Activated B cell treated with CpG ODN at 0.5 μM for 24 hours (primary cell): ENCODE measurements at regions of chr6 and their contacts with region 1.

Region 1: DNA sequence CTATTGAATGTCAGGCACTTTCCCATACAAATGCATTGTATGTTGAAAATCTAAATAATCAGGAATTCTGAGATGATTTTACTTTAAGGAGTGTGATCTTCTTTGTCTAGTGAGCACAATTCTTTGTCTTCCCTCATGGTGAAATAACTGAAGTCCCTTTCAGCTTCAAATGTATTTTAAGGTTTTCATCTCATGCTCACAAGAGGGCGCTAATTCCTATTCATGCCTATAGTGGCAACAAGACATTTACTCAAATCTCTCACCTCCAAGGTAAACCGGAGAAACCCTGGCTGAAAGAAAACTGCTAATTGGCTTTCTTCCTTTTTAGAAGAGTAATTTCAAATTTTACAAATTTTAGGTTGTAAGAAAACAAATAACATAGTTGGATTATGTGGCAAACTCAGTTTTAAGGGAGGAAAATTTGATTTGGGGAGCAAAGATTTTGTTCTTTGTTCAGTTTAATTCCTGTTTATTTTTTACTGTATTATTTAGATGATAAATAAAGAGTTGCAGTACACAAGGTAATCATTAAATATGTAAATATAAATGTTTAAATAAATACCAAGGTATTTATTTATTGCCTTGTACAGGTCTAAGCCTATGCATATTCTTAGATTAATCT is 69.1 kb downstream of the SLC35F1 start:
- DNase-seq: no peak
- ATAC-seq: no peak
- H3K4me3 Mint-ChIP-seq: no peak overlapping the region
- H3K27ac Mint-ChIP-seq: no peak overlapping the region
- H3K4me1 Mint-ChIP-seq: no peaks in the 10 kb centered on the region
- H3K27me3 Mint-ChIP-seq: no peaks in the 10 kb centered on the region
- CTCF ChIP-seq: peak; percentile 23

Region 2: DNA sequence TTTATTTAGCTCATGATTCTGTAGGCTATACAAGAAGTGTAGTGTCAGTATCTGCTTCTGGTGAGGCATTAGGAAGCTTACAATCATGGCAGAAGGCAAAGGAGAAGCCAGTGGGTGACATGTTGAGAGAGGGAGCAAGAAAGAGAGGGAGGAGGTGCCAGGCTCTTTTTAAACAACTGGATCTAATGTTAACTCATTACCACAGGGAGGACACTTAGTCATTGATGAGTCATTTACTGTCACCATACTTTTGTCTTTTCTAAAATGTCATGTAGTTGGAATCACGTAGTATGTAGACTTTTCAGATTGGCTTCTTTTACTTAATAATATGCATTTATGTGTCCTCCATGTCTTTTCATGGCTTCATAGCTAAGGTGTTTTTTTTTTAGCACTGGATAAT is 242.8 kb before region 1 on chr6:
- CTCF ChIA-PET with region 1: no interaction called
- POLR2A ChIA-PET with region 1: no interaction called
- intact Hi-C with region 1: no loop called
- DNase-seq: no peak
- ATAC-seq: no peak
- H3K4me3 Mint-ChIP-seq: no peak overlapping the region
- H3K27ac Mint-ChIP-seq: no peak overlapping the region
- H3K4me1 Mint-ChIP-seq: no peaks in the 10 kb centered on the region
- H3K27me3 Mint-ChIP-seq: peaks cover 6% of the 10 kb centered on the region
- CTCF ChIP-seq: no peak

Region 3: DNA sequence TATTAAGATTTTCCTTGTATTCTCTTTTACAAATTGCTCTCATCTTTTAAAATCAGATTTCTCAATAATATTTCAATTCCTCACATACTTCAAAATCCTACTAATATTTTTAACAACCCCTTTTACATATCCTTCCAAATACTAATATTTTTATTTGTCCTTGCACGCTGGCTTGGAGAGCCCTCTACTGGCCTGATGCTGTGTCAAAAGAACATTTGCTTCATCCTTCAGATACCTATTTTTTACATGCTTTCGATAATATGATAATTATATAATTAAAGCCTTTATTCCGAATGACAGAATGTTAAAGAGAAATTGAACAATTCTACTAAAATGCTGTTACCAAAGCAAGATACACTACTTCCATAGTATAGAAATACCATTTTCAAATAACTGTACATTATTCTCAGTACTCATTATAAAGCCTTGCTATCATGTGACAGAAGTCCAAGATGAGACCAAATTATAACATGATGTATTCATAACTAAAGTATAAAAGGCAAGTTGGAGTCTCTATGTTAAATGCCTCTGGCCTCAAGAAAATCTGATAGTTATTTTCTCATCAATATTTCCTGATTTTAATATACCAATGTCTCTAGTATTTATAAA is 533.0 kb after region 1 on chr6:
- CTCF ChIA-PET with region 1: no interaction called
- POLR2A ChIA-PET with region 1: no interaction called
- intact Hi-C with region 1: loop called (anchors 2 kb)
- DNase-seq: no peak
- ATAC-seq: no peak
- H3K4me3 Mint-ChIP-seq: no peak overlapping the region
- H3K27ac Mint-ChIP-seq: no peak overlapping the region
- H3K4me1 Mint-ChIP-seq: no peaks in the 10 kb centered on the region
- H3K27me3 Mint-ChIP-seq: no peaks in the 10 kb centered on the region
- CTCF ChIP-seq: no peak

Region 4: GRCh38 chr6:118551063-118552053 is 575.2 kb after region 1 on chr6:
- CTCF ChIA-PET with region 1: interaction called, 3 read pairs
- POLR2A ChIA-PET with region 1: no interaction called
- intact Hi-C with region 1: loop called (anchors 1 kb)
- DNase-seq: no peak
- ATAC-seq: peak; percentile 57
- H3K4me3 Mint-ChIP-seq: no peak overlapping the region
- H3K27ac Mint-ChIP-seq: no peak overlapping the region
- H3K4me1 Mint-ChIP-seq: no peaks in the 10 kb centered on the region
- H3K27me3 Mint-ChIP-seq: no peaks in the 10 kb centered on the region
- CTCF ChIP-seq: no peak

Region 5: GRCh38 chr6:118618679-118619377 is 642.7 kb after region 1 on chr6:
- CTCF ChIA-PET with region 1: interaction called, 4 read pairs
- POLR2A ChIA-PET with region 1: no interaction called
- intact Hi-C with region 1: loop called (anchors 1 kb)
- DNase-seq: peak; percentile 41
- ATAC-seq: peak; percentile 93
- H3K4me3 Mint-ChIP-seq: no peak overlapping the region
- H3K27ac Mint-ChIP-seq: no peak overlapping the region
- H3K4me1 Mint-ChIP-seq: peaks cover 19% of the 10 kb centered on the region
- H3K27me3 Mint-ChIP-seq: no peaks in the 10 kb centered on the region
- CTCF ChIP-seq: no peak

Region 6: GRCh38 chr6:118800394-118801071 is 824.4 kb after region 1 on chr6:
- CTCF ChIA-PET with region 1: no interaction called
- POLR2A ChIA-PET with region 1: no interaction called
- intact Hi-C with region 1: loop called (anchors 10 kb)
- DNase-seq: peak; percentile 34
- ATAC-seq: peak; percentile 91
- H3K4me3 Mint-ChIP-seq: peak overlapping the region; percentile 52
- H3K27ac Mint-ChIP-seq: no peak overlapping the region
- H3K4me1 Mint-ChIP-seq: peaks cover 25% of the 10 kb centered on the region
- H3K27me3 Mint-ChIP-seq: no peaks in the 10 kb centered on the region
- CTCF ChIP-seq: peak; percentile 25

Region 7: DNA sequence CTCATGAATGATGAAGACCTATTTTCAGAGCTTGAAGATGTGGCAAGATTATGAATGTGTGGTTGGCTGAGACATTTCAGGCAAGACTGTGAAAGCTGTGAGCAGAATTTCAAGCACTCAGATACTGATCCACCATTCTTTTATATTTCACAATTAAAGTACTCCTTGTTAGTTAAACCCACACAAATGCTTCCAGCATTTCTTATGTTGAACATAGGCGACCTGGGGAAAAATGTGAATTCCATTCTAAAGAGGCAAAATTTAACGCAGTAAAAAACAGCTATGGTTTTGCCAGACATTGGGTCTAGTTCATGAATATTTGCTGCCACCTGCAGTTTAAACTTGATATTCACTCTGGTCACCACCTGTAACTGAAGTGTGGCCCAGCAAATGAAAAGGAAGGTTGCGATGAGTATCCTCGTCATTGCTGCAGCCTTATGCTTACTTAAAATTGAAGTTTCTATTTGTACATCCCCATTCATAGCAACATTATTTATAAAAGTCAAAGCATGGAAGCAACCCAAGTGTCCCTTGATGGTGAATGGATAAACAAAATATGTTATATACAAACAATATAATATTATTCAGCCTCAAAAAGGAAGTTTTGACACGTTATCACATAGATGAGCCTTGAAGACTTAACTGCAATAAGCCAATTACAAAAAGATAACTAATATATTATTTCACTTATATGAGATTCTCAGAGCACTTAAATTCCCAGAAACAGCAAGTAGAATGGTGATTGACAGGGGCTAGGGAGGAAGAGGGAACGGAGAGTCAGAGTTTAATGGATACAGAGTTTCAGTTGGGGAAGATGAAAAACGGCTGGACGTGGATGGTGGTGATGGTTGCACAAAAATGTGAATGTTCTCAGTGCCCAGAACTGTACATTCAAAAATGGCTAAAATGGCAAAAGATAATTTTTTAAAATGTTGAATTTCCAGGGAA is 1134.7 kb after region 1 on chr6:
- CTCF ChIA-PET with region 1: interaction called, 8 read pairs
- POLR2A ChIA-PET with region 1: no interaction called
- intact Hi-C with region 1: loop called (anchors 1 kb)
- DNase-seq: no peak
- ATAC-seq: peak; percentile 42
- H3K4me3 Mint-ChIP-seq: no peak overlapping the region
- H3K27ac Mint-ChIP-seq: no peak overlapping the region
- H3K4me1 Mint-ChIP-seq: no peaks in the 10 kb centered on the region
- H3K27me3 Mint-ChIP-seq: peaks cover 3% of the 10 kb centered on the region
- CTCF ChIP-seq: no peak